Endothelial cell of umbilical vein (primary cell): ENCODE measurements at regions of chr1 and their contacts with region 1.

Region 1: GRCh38 chr1:220810179-220810653 is 23.5 kb downstream of the MTARC1 start:
- DNase-seq: peak; percentile 82
- H3K4me3 ChIP-seq: no peak overlapping the region
- H3K27ac ChIP-seq: no peak overlapping the region
- H3K4me1 ChIP-seq: peaks cover 8% of the 10 kb centered on the region
- H3K27me3 ChIP-seq: peaks cover 6 to 11% of the 10 kb centered on the region in 2 experiments
- CTCF ChIP-seq: peak; percentile 89 to 95
- POLR2A ChIP-seq: no peak

Region 2: GRCh38 chr1:220579317-220579716 is 230.9 kb before region 1 on chr1:
- CTCF ChIA-PET with region 1: no interaction called
- POLR2A ChIA-PET with region 1: no interaction called
- dilution Hi-C with region 1: no loop called
- intact Hi-C with region 1: no loop called
- DNase-seq: no peak
- H3K4me3 ChIP-seq: no peak overlapping the region
- H3K27ac ChIP-seq: no peak overlapping the region
- H3K4me1 ChIP-seq: no peaks in the 10 kb centered on the region
- H3K27me3 ChIP-seq: no peaks in the 10 kb centered on the region
- CTCF ChIP-seq: no peak
- POLR2A ChIP-seq: no peak

Region 3: DNA sequence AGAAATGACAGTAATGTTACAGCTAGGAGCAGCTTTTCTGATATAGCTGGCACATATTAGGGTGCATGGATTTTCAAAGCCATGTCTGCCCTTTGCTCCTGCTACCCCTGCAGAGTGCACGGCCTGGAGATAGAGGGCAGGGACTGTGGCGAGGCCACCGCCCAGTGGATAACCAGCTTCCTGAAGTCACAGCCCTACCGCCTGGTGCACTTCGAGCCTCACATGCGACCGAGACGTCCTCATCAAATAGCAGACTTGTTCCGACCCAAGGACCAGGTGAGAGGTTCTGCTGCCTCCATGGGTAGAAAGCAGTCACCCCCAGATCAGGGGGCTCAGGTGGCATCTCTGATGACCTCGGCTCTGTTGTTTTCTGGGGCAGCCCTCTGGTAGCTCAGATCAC is 13.7 kb before region 1 on chr1:
- CTCF ChIA-PET with region 1: no interaction called
- POLR2A ChIA-PET with region 1: no interaction called
- dilution Hi-C with region 1: no loop called
- intact Hi-C with region 1: no loop called
- DNase-seq: no peak
- H3K4me3 ChIP-seq: no peak overlapping the region
- H3K27ac ChIP-seq: no peak overlapping the region
- H3K4me1 ChIP-seq: no peaks in the 10 kb centered on the region
- H3K27me3 ChIP-seq: no peaks in the 10 kb centered on the region
- CTCF ChIP-seq: no peak
- POLR2A ChIP-seq: no peak

Region 4: DNA sequence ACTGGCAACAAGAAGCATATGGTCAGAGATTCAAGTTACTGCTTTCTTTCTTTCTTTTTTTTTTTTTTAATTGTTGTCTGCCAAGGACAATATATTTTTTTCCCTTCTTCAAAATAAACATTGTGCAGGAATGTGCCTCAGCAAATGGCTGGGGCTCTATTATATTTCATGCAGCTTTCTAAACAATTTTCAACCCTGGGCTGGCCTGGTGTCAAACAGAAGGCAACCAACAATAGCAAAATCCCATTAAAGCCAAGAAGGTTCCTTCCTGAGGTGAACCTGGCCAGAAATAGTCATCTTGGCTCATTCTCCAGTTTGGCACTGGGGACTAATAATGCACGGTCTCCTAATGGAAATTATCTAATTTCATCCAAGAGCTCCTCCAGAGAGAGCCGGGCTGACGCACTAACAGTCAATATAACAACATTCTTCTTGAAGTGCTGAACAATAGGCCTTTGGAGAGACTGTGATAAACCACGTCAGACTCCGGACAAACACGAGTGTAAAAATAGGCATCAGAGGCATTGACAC is 33.3 kb after region 1 on chr1:
- CTCF ChIA-PET with region 1: interaction called, 11 read pairs
- POLR2A ChIA-PET with region 1: no interaction called
- dilution Hi-C with region 1: no loop called
- intact Hi-C with region 1: loop called (anchors 1 kb)
- DNase-seq: peak; percentile 99
- H3K4me3 ChIP-seq: no peak overlapping the region
- H3K27ac ChIP-seq: peak overlapping the region; percentile 65
- H3K4me1 ChIP-seq: peaks cover 13% of the 10 kb centered on the region
- H3K27me3 ChIP-seq: peaks cover 0 to 3% of the 10 kb centered on the region in 2 experiments
- CTCF ChIP-seq: no peak
- POLR2A ChIP-seq: no peak

Region 5: DNA sequence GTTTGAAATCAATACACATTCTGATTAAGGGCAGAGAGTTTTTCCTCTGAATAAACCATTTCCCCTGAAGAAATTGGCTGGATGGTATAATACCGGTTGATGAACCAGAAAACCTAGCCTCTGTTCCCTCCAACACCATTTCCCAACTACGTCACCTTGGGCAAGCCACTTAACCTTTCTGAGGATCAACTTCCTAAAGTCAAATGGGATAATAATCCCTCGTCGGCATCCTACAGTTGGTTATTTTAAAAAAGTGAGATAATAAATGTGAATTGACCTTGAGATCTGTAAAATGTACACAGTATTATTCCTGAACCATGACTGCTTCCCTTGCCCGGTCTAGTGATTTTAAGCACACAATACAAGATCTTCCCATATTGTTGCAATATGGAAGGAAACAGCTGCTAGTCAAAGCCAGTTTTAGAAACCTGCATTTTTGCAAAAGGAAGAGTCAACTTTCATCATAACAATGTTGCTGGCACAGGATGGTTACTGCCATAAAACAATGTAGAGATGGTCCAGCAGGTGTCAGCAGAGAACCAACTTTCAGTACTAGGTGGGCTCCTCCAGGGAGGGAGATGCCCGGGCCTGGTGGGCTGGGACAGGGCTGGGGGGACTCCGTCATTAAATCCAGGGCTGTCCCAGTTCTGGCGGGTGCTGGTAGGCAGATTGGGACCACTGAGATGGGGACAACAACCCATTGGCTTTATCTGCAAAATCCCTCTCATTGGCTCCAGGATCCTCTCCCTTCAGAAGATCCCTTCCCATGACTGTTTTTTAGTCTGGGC is 63.8 kb after region 1 on chr1:
- CTCF ChIA-PET with region 1: interaction called, 12 read pairs
- POLR2A ChIA-PET with region 1: no interaction called
- dilution Hi-C with region 1: no loop called
- intact Hi-C with region 1: loop called (anchors 1 kb)
- DNase-seq: peak; percentile 93
- H3K4me3 ChIP-seq: no peak overlapping the region
- H3K27ac ChIP-seq: peak overlapping the region; percentile 0
- H3K4me1 ChIP-seq: peaks cover 37% of the 10 kb centered on the region
- H3K27me3 ChIP-seq: peaks cover 3 to 14% of the 10 kb centered on the region in 2 experiments
- CTCF ChIP-seq: peak; percentile 52 to 69
- POLR2A ChIP-seq: no peak

Region 6: GRCh38 chr1:220990427-220991339 is 180.5 kb after region 1 on chr1:
- CTCF ChIA-PET with region 1: interaction called, 5 read pairs
- POLR2A ChIA-PET with region 1: no interaction called
- dilution Hi-C with region 1: no loop called
- intact Hi-C with region 1: loop called (anchors 5 kb)
- DNase-seq: peak; percentile 82
- H3K4me3 ChIP-seq: no peak overlapping the region
- H3K27ac ChIP-seq: peak overlapping the region; percentile 24
- H3K4me1 ChIP-seq: peaks cover 15% of the 10 kb centered on the region
- H3K27me3 ChIP-seq: no peaks in the 10 kb centered on the region
- CTCF ChIP-seq: peak in 1 of 2 donors; percentile 17
- POLR2A ChIP-seq: no peak

Region 7: DNA sequence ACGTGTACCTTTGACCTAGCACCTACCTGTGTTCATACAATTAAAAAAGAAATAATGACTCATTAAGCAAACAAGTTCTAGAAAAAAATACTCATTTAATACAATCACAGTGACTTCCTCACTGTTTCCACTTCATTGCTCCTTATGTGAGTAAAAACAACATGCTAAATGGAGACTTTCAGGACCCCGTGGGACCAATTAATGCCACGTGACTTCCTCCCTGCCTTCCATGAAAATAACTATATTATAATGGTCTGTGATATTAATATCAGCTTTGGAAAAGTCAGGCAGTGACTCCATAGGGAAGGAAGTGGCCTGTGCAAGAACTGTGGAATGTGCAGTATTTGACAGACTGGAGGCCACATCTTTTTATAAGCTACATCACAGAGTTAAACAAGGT is 406.8 kb after region 1 on chr1:
- CTCF ChIA-PET with region 1: interaction called, 3 read pairs
- POLR2A ChIA-PET with region 1: no interaction called
- dilution Hi-C with region 1: no loop called
- intact Hi-C with region 1: loop called (anchors 5 kb)
- DNase-seq: peak; percentile 92
- H3K4me3 ChIP-seq: no peak overlapping the region
- H3K27ac ChIP-seq: peak overlapping the region; percentile 6
- H3K4me1 ChIP-seq: peaks cover 14% of the 10 kb centered on the region
- H3K27me3 ChIP-seq: peaks cover 0 to 3% of the 10 kb centered on the region in 2 experiments
- CTCF ChIP-seq: no peak
- POLR2A ChIP-seq: no peak

Region 8: DNA sequence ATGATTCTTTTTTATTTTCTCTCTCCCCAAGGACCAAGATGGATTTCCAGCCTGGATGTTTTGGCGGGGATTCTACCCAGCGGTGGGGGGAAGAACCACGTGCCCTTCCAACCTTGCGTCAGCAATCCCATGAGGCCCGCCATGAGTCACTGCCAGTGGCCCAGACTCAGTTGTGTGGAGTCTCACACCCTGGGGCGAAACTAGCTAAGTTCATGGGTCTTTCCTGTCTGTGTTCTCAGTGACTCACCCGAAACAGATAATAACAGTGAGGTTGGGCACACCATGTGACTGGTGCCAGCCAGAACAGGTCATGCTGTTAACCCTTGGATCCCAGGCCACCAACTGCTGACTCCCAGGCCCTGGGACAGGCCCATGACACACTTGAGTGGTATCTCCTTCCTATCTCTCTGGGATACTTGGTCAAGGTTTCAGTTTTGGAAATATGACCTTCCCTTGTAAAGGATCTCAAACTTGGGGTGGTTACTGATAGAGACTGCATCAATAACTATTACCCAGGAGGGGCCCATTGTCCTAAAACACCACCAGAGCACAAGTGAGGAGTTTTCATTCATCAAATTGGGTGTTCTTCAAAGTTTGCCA is 1029.7 kb after region 1 on chr1:
- CTCF ChIA-PET with region 1: no interaction called
- POLR2A ChIA-PET with region 1: no interaction called
- dilution Hi-C with region 1: no loop called
- intact Hi-C with region 1: loop called (anchors 10 kb)
- DNase-seq: peak; percentile 45
- H3K4me3 ChIP-seq: no peak overlapping the region
- H3K27ac ChIP-seq: peak overlapping the region; percentile 4
- H3K4me1 ChIP-seq: peaks cover 16% of the 10 kb centered on the region
- H3K27me3 ChIP-seq: no peaks in the 10 kb centered on the region
- CTCF ChIP-seq: no peak
- POLR2A ChIP-seq: no peak

Region 9: GRCh38 chr1:222171005-222171404 is 1360.8 kb after region 1 on chr1:
- CTCF ChIA-PET with region 1: interaction called, 7 read pairs
- POLR2A ChIA-PET with region 1: no interaction called
- dilution Hi-C with region 1: no loop called
- intact Hi-C with region 1: loop called (anchors 5 kb)
- DNase-seq: no peak
- H3K4me3 ChIP-seq: no peak overlapping the region
- H3K27ac ChIP-seq: no peak overlapping the region
- H3K4me1 ChIP-seq: no peaks in the 10 kb centered on the region
- H3K27me3 ChIP-seq: no peaks in the 10 kb centered on the region
- CTCF ChIP-seq: peak; percentile 17 to 31
- POLR2A ChIP-seq: no peak